ENCODE measurements at regions of chr1 and their contacts with region 1.

Region 1: DNA sequence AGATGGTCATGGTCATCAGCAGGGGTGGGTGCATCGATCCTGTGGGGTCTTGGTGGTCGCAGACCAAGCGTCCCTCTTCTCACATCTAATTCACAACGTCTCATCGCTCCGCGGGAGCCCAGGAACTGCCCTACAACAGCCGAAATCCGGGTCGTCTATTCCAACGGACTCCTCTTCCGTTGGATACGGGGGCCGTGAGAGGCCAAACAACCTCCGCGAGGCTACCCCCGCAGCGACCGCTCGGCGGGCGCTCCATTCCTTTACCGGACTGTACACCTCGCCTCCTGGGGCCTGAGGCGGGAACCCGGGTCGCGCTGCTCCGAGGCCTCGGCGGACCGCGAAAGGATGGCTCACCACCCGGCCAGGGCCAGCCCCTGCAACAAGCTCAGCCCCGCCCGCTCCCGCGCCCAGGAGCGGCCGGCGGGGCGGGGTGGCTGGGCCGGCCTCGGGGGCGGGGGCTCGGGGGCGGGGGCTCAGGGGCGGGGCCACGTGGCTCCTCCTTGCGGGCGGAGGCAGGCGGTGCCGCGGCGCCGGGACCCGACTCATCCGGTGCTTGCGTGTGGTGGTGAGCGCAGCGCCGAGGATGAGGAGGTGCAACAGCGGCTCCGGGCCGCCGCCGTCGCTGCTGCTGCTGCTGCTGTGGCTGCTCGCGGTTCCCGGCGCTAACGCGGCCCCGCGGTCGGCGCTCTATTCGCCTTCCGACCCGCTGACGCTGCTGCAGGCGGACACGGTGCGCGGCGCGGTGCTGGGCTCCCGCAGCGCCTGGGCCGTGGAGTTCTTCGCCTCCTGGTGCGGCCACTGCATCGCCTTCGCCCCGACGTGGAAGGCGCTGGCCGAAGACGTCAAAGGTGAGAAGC is at the start of gene QSOX1:
- DNase-seq: peak; percentile 91
- H3K4me3 Mint-ChIP-seq: peak within 1 kb of the TSS; percentile 99
- H3K27ac Mint-ChIP-seq: peak within 1 kb of the TSS; percentile 79
- H3K4me1 Mint-ChIP-seq: peaks cover 73% of the 10 kb centered on the region
- H3K27me3 Mint-ChIP-seq: no peaks in the 10 kb centered on the region
- CTCF ChIP-seq: no peak
- total RNA-seq, gene QSOX1: 462 and 505 TPM in 2 replicates

Region 2: GRCh38 chr1:179882243-179883039 is 272.1 kb before region 1 on chr1 and contains the start of gene TOR1AIP1:
- CTCF ChIA-PET with region 1: no interaction called
- intact Hi-C with region 1: loop called (anchors 2 kb)
- DNase-seq: peak; percentile 98
- H3K4me3 Mint-ChIP-seq: peak within 1 kb of the TSS; percentile 96
- H3K27ac Mint-ChIP-seq: peak within 1 kb of the TSS; percentile 99
- H3K4me1 Mint-ChIP-seq: peaks cover 36% of the 10 kb centered on the region
- H3K27me3 Mint-ChIP-seq: no peaks in the 10 kb centered on the region
- CTCF ChIP-seq: peak; percentile 30
- total RNA-seq, gene TOR1AIP1: 40.1 and 46.7 TPM in 2 replicates

Region 3: GRCh38 chr1:180040034-180040433 is 114.5 kb before region 1 on chr1:
- CTCF ChIA-PET with region 1: no interaction called
- intact Hi-C with region 1: no loop called
- DNase-seq: no peak
- H3K4me3 Mint-ChIP-seq: no peak overlapping the region
- H3K27ac Mint-ChIP-seq: no peak overlapping the region
- H3K4me1 Mint-ChIP-seq: no peaks in the 10 kb centered on the region
- H3K27me3 Mint-ChIP-seq: no peaks in the 10 kb centered on the region
- CTCF ChIP-seq: no peak

Region 4: GRCh38 chr1:180168786-180169639 is 14.5 kb after region 1 on chr1:
- CTCF ChIA-PET with region 1: interaction called, 89 read pairs
- intact Hi-C with region 1: loop called (anchors 2 kb)
- DNase-seq: peak; percentile 80
- H3K4me3 Mint-ChIP-seq: peak overlapping the region; percentile 45
- H3K27ac Mint-ChIP-seq: peak overlapping the region; percentile 66
- H3K4me1 Mint-ChIP-seq: peaks cover 82% of the 10 kb centered on the region
- H3K27me3 Mint-ChIP-seq: no peaks in the 10 kb centered on the region
- CTCF ChIP-seq: peak; percentile 59

Measured in Calu3 (cell line).